ENCODE measurements at regions of chr1 and their contacts with region 1.

Region 1: DNA sequence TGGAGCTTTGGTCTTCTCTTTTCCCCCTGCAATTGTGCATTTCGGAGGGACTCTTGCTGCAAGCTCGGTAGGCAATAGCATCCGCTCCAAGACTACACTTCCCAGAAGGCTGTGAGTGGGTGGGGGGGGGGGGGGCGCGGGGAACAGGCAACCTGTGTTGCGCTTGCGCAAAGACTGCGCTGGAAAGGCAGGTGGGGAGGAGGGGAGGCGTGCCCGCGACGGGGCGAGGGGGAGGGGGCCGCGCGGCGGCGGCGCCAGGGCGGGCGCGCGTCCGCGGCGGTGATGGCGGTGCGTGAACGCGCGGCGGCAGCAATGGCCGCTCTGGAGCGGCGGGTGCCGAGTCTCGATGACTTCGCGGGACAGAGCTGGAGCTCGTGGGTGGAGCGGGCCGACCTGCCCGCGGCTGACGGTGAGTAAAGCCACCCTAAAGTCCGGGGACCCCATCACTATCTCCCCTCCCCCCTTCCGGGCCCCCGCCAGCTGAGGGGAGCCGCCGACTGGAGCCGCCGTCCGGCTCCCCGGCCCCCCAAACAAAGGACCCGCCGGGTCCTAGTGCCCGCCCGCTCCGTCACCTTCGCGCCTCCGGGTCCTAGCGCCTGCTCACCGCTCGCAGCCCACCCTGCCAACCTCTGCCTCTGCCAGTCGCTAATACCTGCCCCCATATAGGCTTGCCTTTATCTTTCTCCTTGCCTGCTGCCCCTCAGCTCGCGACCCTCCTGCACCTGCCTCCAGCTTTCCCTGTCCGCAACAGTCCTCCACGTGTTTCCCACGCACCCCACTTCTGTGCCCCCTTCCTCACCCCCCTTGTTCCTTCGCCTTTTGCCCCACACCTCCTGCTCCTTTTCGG is at the start of gene ATXN7L2:
- DNase-seq: peak; percentile 42
- ATAC-seq: peak; percentile 86
- H3K4me3 ChIP-seq: peak within 1 kb of the TSS; percentile 74
- H3K27ac ChIP-seq: peak within 1 kb of the TSS; percentile 73
- H3K4me1 ChIP-seq: peaks cover 10% of the 10 kb centered on the region
- H3K27me3 ChIP-seq: peaks cover 0 to 3% of the 10 kb centered on the region in 2 experiments; a peak in 3 of 4 replicates
- CTCF ChIP-seq: no peak; a peak in 1 of 6 replicates
- EP300 ChIP-seq: 0 out of 4 replicates have a peak, but pooled peaks of 1 of the 2 experiments have one; percentile 0
- POLR2A ChIP-seq: peak; percentile 91
- RAD21 ChIP-seq: no peak
- polyA plus RNA-seq, gene ATXN7L2: 0.27 to 0.80 TPM

Region 2: GRCh38 chr1:109426278-109427170 is 57.4 kb before region 1 on chr1 and contains the start of gene PSMA5:
- CTCF ChIA-PET with region 1: no interaction called
- POLR2A ChIA-PET with region 1: interaction called, 13 read pairs
- RAD21 ChIA-PET with region 1: interaction called, 7 read pairs
- SMC1A ChIA-PET with region 1: interaction called, 7 read pairs
- in situ Hi-C with region 1: no loop called
- intact Hi-C with region 1: loop called (anchors 1 kb)
- DNase-seq: peak; percentile 99
- ATAC-seq: peak; percentile 99
- H3K4me3 ChIP-seq: peak within 1 kb of the TSS; percentile 98
- H3K27ac ChIP-seq: peak within 1 kb of the TSS; percentile 89
- H3K4me1 ChIP-seq: no peaks in the 10 kb centered on the region; the same call in 1 of the 2 replicates
- H3K27me3 ChIP-seq: no peaks in the 10 kb centered on the region
- CTCF ChIP-seq: no peak
- EP300 ChIP-seq: peak in 1 of 2 experiments; percentile 47; a peak in 1 of 4 replicates
- POLR2A ChIP-seq: peak; percentile 100
- RAD21 ChIP-seq: no peak
- polyA plus RNA-seq, gene PSMA5: 267 to 271 TPM

Region 3: GRCh38 chr1:109620841-109621286 is 137.0 kb after region 1 on chr1:
- CTCF ChIA-PET with region 1: no interaction called
- POLR2A ChIA-PET with region 1: interaction called, 3 read pairs
- RAD21 ChIA-PET with region 1: no interaction called
- SMC1A ChIA-PET with region 1: no interaction called
- in situ Hi-C with region 1: loop called (anchors 5 kb)
- intact Hi-C with region 1: no loop called
- DNase-seq: peak; percentile 66
- ATAC-seq: peak; percentile 81
- H3K4me3 ChIP-seq: peak overlapping the region; percentile 85
- H3K27ac ChIP-seq: peak overlapping the region; percentile 72
- H3K4me1 ChIP-seq: peaks cover 41% of the 10 kb centered on the region
- H3K27me3 ChIP-seq: no peaks in the 10 kb centered on the region
- CTCF ChIP-seq: no peak
- EP300 ChIP-seq: no peak
- POLR2A ChIP-seq: peak; percentile 52; the same call in 1 of the 2 replicates
- RAD21 ChIP-seq: no peak

Measured in GM12878 (cell line).